Activated naive CD4-positive, alpha-beta T cell treated with anti-CD3 and anti-CD28 coated beads, Interleukin-2, amount 10 ng/mL, durations not matched to agents 7 days and 5 days (primary cell): ENCODE measurements at regions of chr20 and their contacts with region 1.

Region 1: DNA sequence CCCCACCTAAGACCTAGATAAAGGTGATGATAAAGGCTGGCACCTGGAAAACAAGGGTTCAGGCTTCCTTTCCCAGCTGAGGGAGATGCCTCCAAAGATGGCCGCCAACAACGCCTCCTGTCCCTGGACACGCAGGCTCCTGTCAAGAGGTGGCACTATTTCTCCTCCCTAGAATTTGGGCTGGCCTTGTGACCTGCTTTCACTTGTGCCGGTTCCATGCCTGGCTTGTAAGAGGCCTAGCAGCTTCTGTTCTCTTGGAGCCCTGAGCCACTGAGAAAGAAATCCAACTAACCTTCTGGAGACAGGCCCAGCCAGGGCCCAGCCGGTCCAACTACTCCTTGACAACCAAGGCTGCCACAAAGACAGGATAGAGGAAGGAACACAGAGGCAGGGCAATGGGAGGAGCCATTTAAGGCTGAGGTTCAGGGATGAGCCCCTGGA is 60.2 kb upstream of the RALY start:
- DNase-seq: peak; percentile 75
- H3K4me3 Mint-ChIP-seq: no peak overlapping the region
- H3K27ac Mint-ChIP-seq: no peak overlapping the region
- H3K4me1 Mint-ChIP-seq: no peaks in the 10 kb centered on the region
- H3K27me3 Mint-ChIP-seq: peaks cover 14% of the 10 kb centered on the region

Region 2: DNA sequence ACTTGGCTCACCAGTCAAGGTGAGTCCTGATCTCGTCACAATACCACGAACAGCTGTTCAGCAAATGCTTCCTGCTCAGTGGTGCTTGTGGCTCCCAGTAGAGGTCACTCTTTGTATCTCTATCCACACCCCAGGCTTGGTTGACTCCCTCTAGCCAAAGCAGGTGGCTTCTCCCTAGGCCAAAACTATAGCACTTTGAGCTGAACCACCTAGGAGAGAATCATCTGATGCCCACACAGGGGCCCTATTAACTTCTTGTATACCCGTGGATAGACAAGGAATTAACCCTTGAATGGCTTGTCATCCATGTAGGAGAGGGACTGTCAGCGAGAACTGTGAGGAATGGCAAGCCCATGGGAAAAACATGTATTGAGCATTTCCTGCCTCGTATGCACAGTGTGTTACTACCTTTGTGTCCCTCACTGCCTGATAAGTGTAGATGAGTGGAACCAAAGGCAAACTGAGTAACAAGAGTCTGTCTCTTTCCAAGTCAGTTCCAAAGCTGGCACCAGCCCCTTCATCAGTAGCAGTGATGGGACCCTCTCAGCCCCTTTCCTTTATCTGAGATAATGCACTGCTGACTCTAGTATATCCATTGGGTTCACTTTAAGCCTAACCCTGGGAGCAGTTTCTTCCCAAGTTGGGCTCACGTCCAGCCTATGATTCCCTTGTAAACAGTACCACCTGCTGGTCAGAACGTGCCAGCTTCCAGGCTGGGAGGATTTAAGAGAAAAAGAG is 136.0 kb after region 1 on chr20:
- CTCF ChIA-PET with region 1: interaction called, 18 read pairs
- DNase-seq: peak; percentile 65
- H3K4me3 Mint-ChIP-seq: no peak overlapping the region
- H3K27ac Mint-ChIP-seq: peak overlapping the region; percentile 46
- H3K4me1 Mint-ChIP-seq: peaks cover 22% of the 10 kb centered on the region
- H3K27me3 Mint-ChIP-seq: no peaks in the 10 kb centered on the region